Heart left ventricle (tissue), 16 donors: ENCODE measurements at regions of chr11 and their contacts with region 1.

Region 1: GRCh38 chr11:59829358-59829757 is 15.9 kb downstream of the CBLIF start:
- DNase-seq: no peak
- ATAC-seq: no peak
- H3K4me3 ChIP-seq: no peak overlapping the region
- H3K27ac ChIP-seq: no peak overlapping the region
- H3K4me1 ChIP-seq: peaks cover 0 to 4% (median 0%) of the 10 kb centered on the region in 12 donors
- H3K27me3 ChIP-seq: no peaks in the 10 kb centered on the region
- CTCF ChIP-seq: no peak
- POLR2A ChIP-seq: no peak

Region 2: GRCh38 chr11:59283825-59284772 is 545.3 kb before region 1 on chr11:
- intact Hi-C with region 1: no loop called
- DNase-seq: peak in 3 of 5 donors; percentile 29 to 45 (median 37)
- ATAC-seq: peak in 3 of 4 donors; percentile 58 to 62 (median 60)
- H3K4me3 ChIP-seq: peak overlapping the region in 1 of 12 donors; percentile 10
- H3K27ac ChIP-seq: no peak overlapping the region
- H3K4me1 ChIP-seq: peaks cover 0 to 6% (median 0%) of the 10 kb centered on the region in 12 donors
- H3K27me3 ChIP-seq: peaks cover 0 to 10% (median 0%) of the 10 kb centered on the region in 9 donors
- CTCF ChIP-seq: peak; percentile 72 to 87 (median 80)
- POLR2A ChIP-seq: no peak

Region 3: DNA sequence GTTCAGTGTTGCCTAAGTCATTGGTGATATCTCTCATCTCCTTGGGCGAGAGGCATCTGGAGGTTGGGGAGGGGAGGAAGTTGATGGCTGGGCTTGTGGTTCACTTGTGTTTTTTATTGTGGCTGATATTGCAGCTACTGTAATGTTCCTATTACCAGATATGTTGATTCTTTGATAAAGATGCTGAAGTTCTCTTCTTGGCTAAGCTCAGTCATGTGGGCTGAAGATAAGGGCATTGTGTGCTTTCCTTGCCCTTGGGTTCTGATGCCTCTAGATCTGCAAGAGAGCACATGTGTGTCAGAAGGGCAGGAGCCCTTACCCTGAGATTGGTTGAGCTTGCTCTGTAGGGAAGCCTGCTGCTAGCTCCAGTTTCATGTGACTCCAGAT is 62.1 kb before region 1 on chr11:
- intact Hi-C with region 1: no loop called
- DNase-seq: no peak
- ATAC-seq: peak in 1 of 4 donors; percentile 19
- H3K4me3 ChIP-seq: no peak overlapping the region
- H3K27ac ChIP-seq: peak overlapping the region in 4 of 12 donors; percentile 11 to 54 (median 27)
- H3K4me1 ChIP-seq: peaks cover 0 to 69% (median 44%) of the 10 kb centered on the region in 12 donors
- H3K27me3 ChIP-seq: no peaks in the 10 kb centered on the region
- CTCF ChIP-seq: no peak
- POLR2A ChIP-seq: no peak

Region 4: GRCh38 chr11:60130496-60130895 is 301.1 kb after region 1 on chr11:
- intact Hi-C with region 1: loop called in 5 of 10 experiments (anchors 5 to 10 kb)
- DNase-seq: no peak
- ATAC-seq: peak in 2 of 4 donors; percentile 45 to 58
- H3K4me3 ChIP-seq: no peak overlapping the region
- H3K27ac ChIP-seq: no peak overlapping the region
- H3K4me1 ChIP-seq: no peaks in the 10 kb centered on the region
- H3K27me3 ChIP-seq: no peaks in the 10 kb centered on the region
- CTCF ChIP-seq: peak in 10 of 12 donors; percentile 6 to 45 (median 32)
- POLR2A ChIP-seq: no peak

Region 5: DNA sequence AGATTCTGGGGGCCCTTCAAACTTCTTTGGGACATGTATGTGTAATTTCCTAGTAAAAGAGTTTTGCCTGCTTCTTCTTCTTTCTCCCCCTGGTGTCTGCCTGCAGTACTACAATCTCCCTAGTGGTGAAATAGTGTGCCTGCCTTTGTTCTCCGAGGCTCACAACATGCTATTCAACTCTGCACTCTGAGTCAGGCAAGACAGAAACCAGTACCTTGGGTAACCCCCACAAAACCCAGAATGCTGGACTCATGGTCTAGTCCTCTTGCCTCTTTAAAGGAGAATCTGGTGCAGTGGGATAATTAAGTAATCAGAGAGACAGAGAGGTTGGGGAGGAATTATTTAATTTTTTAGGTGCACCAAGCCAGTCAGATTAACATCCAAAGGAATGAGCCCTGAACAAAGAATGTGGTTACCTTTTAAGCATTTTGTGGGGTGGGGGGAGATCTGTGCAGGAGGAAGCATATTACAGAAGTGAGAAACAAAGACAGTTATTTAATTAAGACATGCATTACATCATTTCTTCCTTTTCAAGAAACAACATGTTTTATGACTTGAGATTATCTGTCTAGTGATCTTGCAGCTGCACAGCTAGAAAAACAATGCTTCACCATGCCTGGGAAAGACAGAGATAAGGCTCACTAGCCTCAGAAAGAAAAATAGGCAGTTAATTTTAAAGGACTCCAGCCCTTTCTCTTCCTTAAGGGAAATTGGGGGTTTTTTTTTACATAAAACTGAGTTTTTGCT is 364.5 kb after region 1 on chr11:
- intact Hi-C with region 1: loop called in 4 of 10 experiments (anchors 5 kb)
- DNase-seq: peak in 3 of 5 donors; percentile 49 to 56 (median 51)
- ATAC-seq: peak; percentile 37 to 90 (median 80)
- H3K4me3 ChIP-seq: no peak overlapping the region
- H3K27ac ChIP-seq: peak overlapping the region in 5 of 12 donors; percentile 9 to 91 (median 61)
- H3K4me1 ChIP-seq: peaks cover 0 to 20% (median 0%) of the 10 kb centered on the region in 12 donors
- H3K27me3 ChIP-seq: peaks cover 0 to 5% (median 0%) of the 10 kb centered on the region in 9 donors
- CTCF ChIP-seq: peak; percentile 73 to 88 (median 81)
- POLR2A ChIP-seq: no peak